GM23248 (cell line): ENCODE measurements at regions of chr1 and their contacts with region 1.

Region 1: DNA sequence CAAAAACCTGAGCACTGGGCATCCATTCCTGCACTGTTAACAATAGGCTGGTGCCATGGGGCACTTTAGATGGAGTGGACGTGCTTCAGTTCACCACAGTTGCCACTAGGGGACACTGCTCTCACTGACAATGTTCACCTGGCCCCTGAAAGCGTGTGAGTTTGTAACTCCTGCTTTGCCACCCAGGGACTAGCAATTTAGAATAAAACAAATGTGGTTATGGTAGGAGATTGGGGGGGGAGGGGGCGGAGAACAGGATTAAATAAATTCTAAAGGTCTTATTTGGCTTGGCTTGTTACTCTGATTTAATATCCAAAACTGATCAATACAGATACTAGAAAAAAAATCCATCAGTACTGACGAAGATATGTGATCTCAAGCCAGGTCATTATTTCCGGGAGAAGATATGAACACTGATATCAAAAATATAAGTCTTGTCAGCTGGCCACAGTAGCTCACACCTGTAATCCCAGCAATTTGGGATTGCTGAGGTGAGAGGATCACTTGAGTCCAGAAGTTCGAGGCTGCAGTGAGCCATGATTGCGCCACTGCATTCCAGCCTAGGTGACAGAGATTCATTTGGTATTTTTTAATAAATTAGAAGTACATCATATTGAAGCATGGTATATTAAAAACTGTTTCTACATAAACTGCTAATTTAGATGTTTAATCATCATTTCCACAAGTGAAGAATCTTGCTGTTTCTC is 23.2 kb downstream of the INTS7 start:
- DNase-seq: peak; percentile 80
- H3K4me3 ChIP-seq: no peak overlapping the region
- H3K27ac ChIP-seq: no peak overlapping the region
- H3K4me1 ChIP-seq: no peaks in the 10 kb centered on the region
- H3K27me3 ChIP-seq: no peaks in the 10 kb centered on the region

Region 2: GRCh38 chr1:211680752-211681327 is 331.3 kb before region 1 on chr1:
- in situ Hi-C with region 1: loop called (anchors 25 kb)
- DNase-seq: peak; percentile 94
- H3K4me3 ChIP-seq: no peak overlapping the region
- H3K27ac ChIP-seq: no peak overlapping the region
- H3K4me1 ChIP-seq: peaks cover 4% of the 10 kb centered on the region; the same call in 1 of the 2 replicates
- H3K27me3 ChIP-seq: no peaks in the 10 kb centered on the region